ENCODE measurements at regions of chr9 and their contacts with region 1.

Region 1: GRCh38 chr9:126704873-126705766 is 91.4 kb downstream of the LMX1B start:
- DNase-seq: peak; percentile 89
- H3K4me3 Mint-ChIP-seq: peak overlapping the region; percentile 44
- H3K27ac Mint-ChIP-seq: no peak overlapping the region
- H3K4me1 Mint-ChIP-seq: peaks cover 18% of the 10 kb centered on the region
- H3K27me3 Mint-ChIP-seq: peaks cover 28% of the 10 kb centered on the region

Region 2: DNA sequence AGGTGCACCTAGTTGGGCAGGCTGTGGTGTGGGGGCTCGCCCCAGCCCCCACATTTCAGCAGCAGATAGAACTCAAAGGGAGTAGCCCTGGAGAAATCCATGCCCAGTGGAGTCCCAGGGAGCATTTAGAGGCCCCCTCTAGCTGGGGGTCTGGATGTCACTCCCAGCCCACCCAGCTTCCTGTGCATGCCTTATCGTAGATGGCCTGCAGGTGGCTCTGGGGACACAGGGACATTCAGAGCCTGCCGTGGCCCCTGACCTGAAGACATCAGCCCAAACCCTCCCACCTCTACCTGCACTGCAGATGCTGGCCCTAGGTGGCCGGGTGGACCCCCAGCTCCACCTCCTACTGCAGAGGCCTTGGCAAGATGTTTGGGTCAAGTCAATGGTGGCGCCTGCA is 140.4 kb before region 1 on chr9:
- CTCF ChIA-PET with region 1: no interaction called
- POLR2A ChIA-PET with region 1: no interaction called
- intact Hi-C with region 1: no loop called
- DNase-seq: no peak
- H3K4me3 Mint-ChIP-seq: no peak overlapping the region
- H3K27ac Mint-ChIP-seq: no peak overlapping the region
- H3K4me1 Mint-ChIP-seq: no peaks in the 10 kb centered on the region
- H3K27me3 Mint-ChIP-seq: peaks cover 52% of the 10 kb centered on the region

Region 3: DNA sequence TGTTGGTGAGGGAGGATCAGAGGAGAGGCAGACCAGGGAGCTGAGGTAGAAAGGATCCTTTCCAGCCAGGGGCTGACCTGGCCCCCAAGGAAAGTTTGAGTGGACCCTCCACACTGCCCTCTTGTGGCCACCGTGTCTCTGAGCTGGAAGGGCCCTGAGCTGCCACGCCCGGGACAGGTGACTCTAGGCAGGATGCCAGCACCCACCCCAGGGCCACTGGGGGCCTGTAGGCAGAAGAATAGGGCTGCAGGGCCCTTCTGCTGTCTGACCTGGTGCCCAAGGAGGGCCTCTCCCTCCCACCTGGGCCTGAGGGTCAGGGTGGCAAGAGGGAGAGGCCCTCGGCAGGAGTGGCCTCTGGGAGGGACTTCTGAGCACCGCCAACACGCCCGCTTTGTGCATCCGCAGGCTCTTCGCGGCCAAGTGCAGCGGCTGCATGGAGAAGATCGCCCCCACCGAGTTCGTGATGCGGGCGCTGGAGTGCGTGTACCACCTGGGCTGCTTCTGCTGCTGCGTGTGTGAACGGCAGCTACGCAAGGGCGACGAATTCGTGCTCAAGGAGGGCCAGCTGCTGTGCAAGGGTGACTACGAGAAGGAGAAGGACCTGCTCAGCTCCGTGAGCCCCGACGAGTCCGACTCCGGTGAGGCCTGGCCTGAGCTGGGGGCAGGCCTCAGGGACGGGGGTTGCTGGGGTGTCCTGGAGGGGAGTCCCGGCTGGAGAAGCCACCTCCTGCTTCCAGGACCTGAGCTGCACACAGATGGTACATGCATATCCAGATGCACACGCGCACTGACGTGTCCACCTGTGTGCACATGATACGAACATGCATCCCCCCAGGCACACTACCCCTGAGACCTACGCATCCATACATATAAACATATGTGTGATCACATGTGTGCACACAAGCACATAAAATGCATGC is 14.4 kb before region 1 on chr9:
- CTCF ChIA-PET with region 1: interaction called, 27 read pairs
- POLR2A ChIA-PET with region 1: no interaction called
- intact Hi-C with region 1: no loop called
- DNase-seq: peak; percentile 68
- H3K4me3 Mint-ChIP-seq: no peak overlapping the region
- H3K27ac Mint-ChIP-seq: no peak overlapping the region
- H3K4me1 Mint-ChIP-seq: no peaks in the 10 kb centered on the region
- H3K27me3 Mint-ChIP-seq: peaks cover 29% of the 10 kb centered on the region

Region 4: DNA sequence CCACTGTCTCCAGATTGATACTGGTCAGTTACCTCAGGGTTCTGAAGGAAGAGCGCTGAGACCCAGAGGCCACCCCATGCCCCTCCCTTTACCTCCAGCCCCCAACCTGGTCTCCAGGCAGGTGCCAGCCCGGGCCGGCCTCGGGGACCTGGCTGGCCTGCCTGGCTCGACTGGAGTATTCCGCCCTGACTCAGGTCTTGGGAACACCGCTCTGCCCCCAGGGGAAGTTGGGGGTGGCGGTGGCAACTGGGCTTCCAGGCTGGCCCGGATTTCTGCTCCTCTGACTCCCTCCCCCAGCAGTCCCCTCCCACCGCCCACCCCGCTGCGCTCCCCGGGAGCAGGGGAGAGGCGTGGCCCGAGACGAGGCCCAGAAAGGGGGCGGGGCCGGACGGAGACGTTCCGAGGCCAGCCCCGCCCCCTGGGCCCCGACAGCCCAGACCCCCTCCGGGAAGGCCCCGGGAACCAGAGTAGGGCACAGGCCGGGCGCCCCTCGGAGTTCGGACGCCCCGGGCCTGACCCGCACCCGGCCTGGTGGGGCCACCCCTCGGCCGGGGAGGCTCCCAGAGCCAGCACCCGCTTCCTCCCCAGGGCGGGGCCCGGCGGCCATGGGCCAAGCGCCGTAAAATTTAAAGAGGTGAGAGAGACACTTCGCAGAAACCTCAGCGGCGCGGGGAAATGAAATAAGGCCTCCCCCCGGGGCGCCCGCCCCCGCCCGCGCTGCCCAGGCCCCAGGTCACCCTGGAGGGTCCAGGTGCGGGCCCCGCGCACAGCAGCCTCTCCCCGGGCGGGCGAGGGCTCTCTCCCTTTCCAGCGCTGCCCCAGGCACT is 17.3 kb after region 1 on chr9:
- CTCF ChIA-PET with region 1: interaction called, 56 read pairs
- POLR2A ChIA-PET with region 1: interaction called, 12 read pairs
- intact Hi-C with region 1: no loop called
- DNase-seq: peak; percentile 94
- H3K4me3 Mint-ChIP-seq: peak overlapping the region; percentile 80
- H3K27ac Mint-ChIP-seq: peak overlapping the region; percentile 89
- H3K4me1 Mint-ChIP-seq: peaks cover 37% of the 10 kb centered on the region
- H3K27me3 Mint-ChIP-seq: no peaks in the 10 kb centered on the region

Region 5: GRCh38 chr9:126745574-126746411 is 40.7 kb after region 1 on chr9:
- CTCF ChIA-PET with region 1: interaction called, 17 read pairs
- POLR2A ChIA-PET with region 1: no interaction called
- intact Hi-C with region 1: loop called (anchors 5 kb)
- DNase-seq: peak; percentile 30
- H3K4me3 Mint-ChIP-seq: no peak overlapping the region
- H3K27ac Mint-ChIP-seq: no peak overlapping the region
- H3K4me1 Mint-ChIP-seq: peaks cover 25% of the 10 kb centered on the region
- H3K27me3 Mint-ChIP-seq: peaks cover 2% of the 10 kb centered on the region

Region 6: DNA sequence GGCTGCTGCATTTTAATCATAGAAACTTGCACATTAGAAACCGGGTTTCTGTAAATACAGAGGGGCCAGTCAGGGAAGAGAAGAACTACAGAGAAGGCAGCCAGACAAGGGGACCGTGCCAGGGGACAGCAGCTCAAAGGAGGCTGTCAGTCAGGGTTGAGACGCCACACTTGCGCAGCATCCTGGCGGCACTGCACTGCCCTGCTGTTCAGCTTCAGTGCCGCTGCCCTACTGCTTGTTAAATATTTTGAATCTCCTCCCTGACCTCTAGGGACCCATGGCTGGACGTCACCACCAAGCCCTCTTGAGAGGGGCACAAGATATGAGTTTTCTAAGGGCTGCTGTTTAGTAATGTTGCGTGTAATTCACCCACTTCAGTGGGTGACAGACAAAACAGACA is 56.2 kb after region 1 on chr9:
- CTCF ChIA-PET with region 1: interaction called, 10 read pairs
- POLR2A ChIA-PET with region 1: no interaction called
- intact Hi-C with region 1: no loop called
- DNase-seq: no peak
- H3K4me3 Mint-ChIP-seq: no peak overlapping the region
- H3K27ac Mint-ChIP-seq: no peak overlapping the region
- H3K4me1 Mint-ChIP-seq: no peaks in the 10 kb centered on the region
- H3K27me3 Mint-ChIP-seq: peaks cover 2% of the 10 kb centered on the region

Region 7: DNA sequence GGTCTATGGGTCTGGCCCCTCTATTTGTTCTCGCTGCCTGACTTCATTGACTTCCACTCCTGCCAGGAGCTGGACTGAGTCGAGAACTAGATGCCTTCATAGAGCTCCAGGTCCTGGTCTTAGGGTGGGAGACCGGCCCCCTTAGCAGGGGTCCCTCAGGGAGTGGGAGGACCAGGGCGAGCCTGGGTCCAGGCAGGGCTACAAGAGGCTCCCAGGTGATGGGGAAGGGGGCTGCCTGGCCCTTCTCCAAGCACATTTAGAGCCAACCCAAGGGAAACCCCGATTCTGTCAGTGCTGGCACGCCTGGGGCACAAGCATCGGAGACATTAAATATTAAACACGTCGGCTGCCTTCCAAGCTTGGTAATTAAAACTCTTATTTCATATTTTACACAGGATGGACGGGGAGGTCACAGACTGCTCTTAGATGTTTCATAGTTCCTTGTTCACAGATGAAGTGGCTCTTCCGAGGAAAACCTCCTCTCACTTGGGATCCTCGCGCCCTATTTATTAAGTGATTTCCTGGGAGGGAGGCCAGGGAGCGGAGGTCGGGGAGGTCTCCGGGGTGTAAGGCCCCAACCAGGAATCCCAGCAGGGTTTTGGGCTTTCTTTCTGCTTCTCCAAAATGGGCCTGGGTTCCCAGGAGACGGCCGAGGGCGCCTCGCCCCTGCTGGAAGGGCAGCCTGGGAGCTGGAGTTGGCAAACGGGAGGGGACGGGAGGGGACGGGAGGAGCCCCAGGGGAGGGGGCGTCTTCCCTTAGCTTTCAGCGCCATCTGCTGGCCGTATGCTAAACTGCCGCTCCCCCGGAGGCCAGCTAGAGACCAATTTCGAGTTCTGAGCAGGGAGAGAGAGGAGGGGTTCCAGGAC is 76.3 kb after region 1 on chr9:
- CTCF ChIA-PET with region 1: interaction called, 447 read pairs
- POLR2A ChIA-PET with region 1: interaction called, 3 read pairs
- intact Hi-C with region 1: loop called (anchors 1 kb)
- DNase-seq: peak; percentile 88
- H3K4me3 Mint-ChIP-seq: no peak overlapping the region
- H3K27ac Mint-ChIP-seq: no peak overlapping the region
- H3K4me1 Mint-ChIP-seq: no peaks in the 10 kb centered on the region
- H3K27me3 Mint-ChIP-seq: peaks cover 20% of the 10 kb centered on the region

Region 8: GRCh38 chr9:126804696-126805545 is 99.8 kb after region 1 on chr9 and contains the start of gene ZBTB43:
- CTCF ChIA-PET with region 1: interaction called, 15 read pairs
- POLR2A ChIA-PET with region 1: no interaction called
- intact Hi-C with region 1: no loop called
- DNase-seq: peak; percentile 99
- H3K4me3 Mint-ChIP-seq: peak within 1 kb of the TSS; percentile 89
- H3K27ac Mint-ChIP-seq: peak within 1 kb of the TSS; percentile 96
- H3K4me1 Mint-ChIP-seq: peaks cover 28% of the 10 kb centered on the region
- H3K27me3 Mint-ChIP-seq: no peaks in the 10 kb centered on the region
- total RNA-seq, gene ZBTB43: 20.5 to 28.4 TPM

Measured in activated CD4-positive, alpha-beta memory T cell treated with anti-CD3 and anti-CD28 coated beads for 36 hours (primary cell).